HepG2 (cell line): ENCODE measurements at regions of chr2 and their contacts with region 1.

Region 1: DNA sequence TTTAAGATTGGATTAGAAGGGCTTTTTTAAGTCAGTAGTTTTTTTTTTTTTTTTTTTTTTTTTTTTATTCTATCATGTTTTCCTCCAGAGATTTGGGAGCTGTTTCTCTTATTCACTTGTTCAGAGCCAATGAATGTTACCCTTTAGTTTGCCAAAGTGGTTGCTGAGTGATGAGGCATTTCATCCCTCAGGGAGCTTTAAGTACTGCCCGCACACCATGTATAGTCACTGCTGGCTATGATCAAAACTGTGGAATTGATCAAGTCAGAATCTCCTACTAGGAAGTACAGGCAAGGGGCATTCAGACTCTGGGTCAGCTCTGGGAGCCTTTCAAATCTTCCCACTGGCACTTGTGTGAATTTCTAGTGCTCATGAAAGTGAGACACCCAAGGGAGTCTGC is 201.6 kb downstream of the IKZF2 start:
- DNase-seq: no peak
- ATAC-seq: no peak
- H3K4me3 ChIP-seq: no peak overlapping the region
- H3K27ac ChIP-seq: no peak overlapping the region
- H3K4me1 ChIP-seq: no peaks in the 10 kb centered on the region
- H3K27me3 ChIP-seq: no peaks in the 10 kb centered on the region
- CTCF ChIP-seq: no peak
- EP300 ChIP-seq: no peak
- POLR2A ChIP-seq: no peak
- RAD21 ChIP-seq: no peak

Region 2: GRCh38 chr2:212912445-212913103 is 37.2 kb before region 1 on chr2:
- CTCF ChIA-PET with region 1: no interaction called
- POLR2A ChIA-PET with region 1: no interaction called
- in situ Hi-C with region 1: no loop called
- intact Hi-C with region 1: no loop called
- DNase-seq: peak; percentile 18
- ATAC-seq: no peak; the same call in 2 of the 3 replicates
- H3K4me3 ChIP-seq: no peak overlapping the region
- H3K27ac ChIP-seq: no peak overlapping the region
- H3K4me1 ChIP-seq: no peaks in the 10 kb centered on the region
- H3K27me3 ChIP-seq: no peaks in the 10 kb centered on the region
- CTCF ChIP-seq: no peak
- EP300 ChIP-seq: no peak; a peak in 1 of 4 replicates
- POLR2A ChIP-seq: no peak
- RAD21 ChIP-seq: no peak

Region 3: GRCh38 chr2:212930556-212931260 is 19.1 kb before region 1 on chr2:
- CTCF ChIA-PET with region 1: no interaction called
- POLR2A ChIA-PET with region 1: no interaction called
- in situ Hi-C with region 1: no loop called
- intact Hi-C with region 1: loop called (anchors 2 kb)
- DNase-seq: no peak
- ATAC-seq: no peak
- H3K4me3 ChIP-seq: no peak overlapping the region
- H3K27ac ChIP-seq: no peak overlapping the region
- H3K4me1 ChIP-seq: no peaks in the 10 kb centered on the region
- H3K27me3 ChIP-seq: no peaks in the 10 kb centered on the region
- CTCF ChIP-seq: no peak
- EP300 ChIP-seq: no peak
- POLR2A ChIP-seq: no peak
- RAD21 ChIP-seq: no peak

Region 4: DNA sequence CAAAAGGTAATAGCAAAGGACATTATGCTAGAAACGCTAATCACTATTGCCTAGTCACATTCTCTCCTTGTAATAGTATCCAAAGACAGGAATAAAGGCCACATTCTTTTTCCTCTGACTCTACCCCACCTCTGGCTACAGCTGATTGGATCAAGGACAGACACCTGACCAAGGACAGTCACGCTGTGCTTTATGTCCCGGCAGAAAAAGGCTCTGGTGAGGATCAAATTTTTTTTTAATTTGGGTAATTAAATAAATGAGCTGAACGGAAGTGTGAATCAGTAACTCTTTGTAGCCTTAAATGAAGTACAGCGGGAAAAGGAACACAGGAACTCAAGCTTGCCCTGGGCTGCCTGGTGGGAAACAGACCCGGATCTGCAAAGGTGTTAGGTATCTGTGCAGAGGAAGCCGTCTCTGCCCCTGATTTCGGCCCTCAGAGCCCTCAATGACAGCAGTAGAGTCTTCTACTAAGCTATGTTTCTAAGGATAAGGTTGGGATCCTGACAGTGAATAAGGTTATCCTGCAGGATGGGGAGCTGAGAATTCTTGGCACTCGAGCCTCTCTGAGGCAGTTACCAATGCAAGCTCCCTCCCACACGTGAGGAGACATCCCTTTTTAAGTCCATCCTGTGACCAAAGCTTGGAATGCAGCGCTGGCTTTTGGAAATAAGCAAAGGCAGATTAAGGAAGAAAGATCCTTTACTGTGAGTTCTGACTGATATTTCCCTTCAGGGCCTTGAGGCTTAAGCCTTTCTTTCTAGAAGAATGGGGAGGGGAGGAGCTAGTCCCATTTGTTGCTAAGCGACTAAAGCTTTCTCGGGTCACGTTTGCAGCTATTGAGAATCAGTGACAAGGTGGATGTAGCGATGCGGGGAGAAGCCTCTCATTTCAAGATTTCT is 239.5 kb after region 1 on chr2:
- CTCF ChIA-PET with region 1: no interaction called
- POLR2A ChIA-PET with region 1: no interaction called
- in situ Hi-C with region 1: no loop called
- intact Hi-C with region 1: no loop called
- DNase-seq: peak; percentile 6
- ATAC-seq: peak; percentile 46
- H3K4me3 ChIP-seq: no peak overlapping the region; a peak in 1 of 6 replicates
- H3K27ac ChIP-seq: no peak overlapping the region
- H3K4me1 ChIP-seq: peaks cover 25% of the 10 kb centered on the region
- H3K27me3 ChIP-seq: no peaks in the 10 kb centered on the region
- CTCF ChIP-seq: no peak
- EP300 ChIP-seq: no peak
- POLR2A ChIP-seq: no peak
- RAD21 ChIP-seq: no peak

Region 5: DNA sequence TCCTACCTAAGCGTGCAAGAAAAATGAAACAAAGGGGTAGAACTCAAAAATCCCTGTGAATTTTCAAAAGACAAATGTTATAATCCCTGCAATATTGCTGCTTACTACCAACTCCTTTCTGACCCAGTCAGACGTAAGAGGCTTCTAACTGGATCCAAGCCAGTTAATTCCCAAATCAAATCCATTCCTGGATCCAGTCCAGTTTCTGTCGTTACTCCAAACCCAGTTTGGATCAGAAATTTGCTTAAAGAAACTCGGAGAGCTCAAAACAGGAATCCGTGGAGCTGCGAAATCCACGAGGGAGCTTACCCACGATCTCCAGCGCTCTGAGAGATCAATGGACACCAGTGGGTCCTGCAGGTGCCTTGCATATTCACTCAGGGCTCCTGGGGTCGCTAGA is 264.4 kb after region 1 on chr2:
- CTCF ChIA-PET with region 1: no interaction called
- POLR2A ChIA-PET with region 1: no interaction called
- in situ Hi-C with region 1: no loop called
- intact Hi-C with region 1: no loop called
- DNase-seq: no peak
- ATAC-seq: no peak
- H3K4me3 ChIP-seq: no peak overlapping the region
- H3K27ac ChIP-seq: no peak overlapping the region
- H3K4me1 ChIP-seq: no peaks in the 10 kb centered on the region
- H3K27me3 ChIP-seq: no peaks in the 10 kb centered on the region
- CTCF ChIP-seq: no peak
- EP300 ChIP-seq: no peak
- POLR2A ChIP-seq: no peak
- RAD21 ChIP-seq: no peak